Activated T-helper 1 cell treated with anti-CD3 and anti-CD28 coated beads, Interleukin-12 subunit alpha, Interleukin-12 subunit beta, Interleukin-2, Interleukin-4 antibody, amounts not matched to agents 30 ng/mL and 10 ng/mL and 1 ng/mL, durations not matched to agents 14 hours and 24 hours and 36 hours (primary cell): ENCODE measurements at regions of chr1 and their contacts with region 1.

Region 1: DNA sequence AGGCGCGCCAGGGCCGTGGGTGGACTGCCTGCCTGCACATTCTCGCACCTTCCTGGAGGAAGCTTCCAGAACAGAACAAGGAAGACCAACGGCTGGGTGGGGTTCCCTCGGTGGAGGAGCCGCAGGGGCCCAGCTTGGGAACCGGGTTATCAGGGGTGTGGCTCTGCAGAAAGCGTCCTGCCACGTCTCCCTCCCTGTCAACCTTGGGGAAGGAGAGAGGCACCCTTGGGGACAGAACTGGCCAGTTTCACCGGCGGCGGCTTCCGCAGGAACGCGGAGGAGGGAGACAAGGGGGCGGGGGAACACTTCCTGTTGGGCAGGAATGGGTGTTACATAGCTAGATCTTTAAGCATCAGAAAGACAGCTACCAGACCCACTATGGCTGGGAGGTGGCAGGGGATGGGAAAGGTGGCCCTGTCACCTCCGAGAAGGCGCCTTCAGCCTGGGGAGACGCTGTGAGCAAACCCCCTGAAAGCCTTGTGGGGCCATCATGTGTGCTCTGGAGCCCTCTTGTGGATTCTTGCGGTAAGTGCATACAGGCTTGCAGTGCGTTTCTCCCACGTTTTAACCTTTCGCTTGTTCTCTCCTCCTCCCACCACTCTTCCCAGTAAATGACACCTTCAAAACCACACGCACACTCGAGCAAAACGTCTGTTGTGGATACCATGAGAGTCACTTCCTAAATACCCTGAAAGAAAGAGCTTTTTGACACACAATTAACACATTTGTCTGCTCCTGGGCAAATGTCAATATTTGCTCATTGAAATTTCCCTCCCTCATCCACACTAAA is 3.8 kb upstream of the PLEKHA6 start:
- DNase-seq: peak; percentile 62
- H3K4me3 Mint-ChIP-seq: peak overlapping the region; percentile 58
- H3K27ac Mint-ChIP-seq: peak overlapping the region; percentile 82
- H3K4me1 Mint-ChIP-seq: peaks cover 40% of the 10 kb centered on the region
- H3K27me3 Mint-ChIP-seq: peaks cover 17% of the 10 kb centered on the region

Region 2: GRCh38 chr1:204162231-204163074 is 201.1 kb before region 1 on chr1:
- intact Hi-C with region 1: loop called (anchors 1 kb)
- DNase-seq: peak; percentile 57
- H3K4me3 Mint-ChIP-seq: no peak overlapping the region
- H3K27ac Mint-ChIP-seq: no peak overlapping the region
- H3K4me1 Mint-ChIP-seq: no peaks in the 10 kb centered on the region
- H3K27me3 Mint-ChIP-seq: peaks cover 4% of the 10 kb centered on the region

Region 3: GRCh38 chr1:204213668-204214662 is 149.6 kb before region 1 on chr1 and contains the start of gene GOLT1A:
- intact Hi-C with region 1: loop called (anchors 1 kb)
- DNase-seq: peak; percentile 10
- H3K4me3 Mint-ChIP-seq: peak within 1 kb of the TSS; percentile 59
- H3K27ac Mint-ChIP-seq: peak within 1 kb of the TSS; percentile 3
- H3K4me1 Mint-ChIP-seq: peaks cover 5% of the 10 kb centered on the region
- H3K27me3 Mint-ChIP-seq: peaks cover 7% of the 10 kb centered on the region
- total RNA-seq, gene GOLT1A: not detected in 2 replicates

Region 4: DNA sequence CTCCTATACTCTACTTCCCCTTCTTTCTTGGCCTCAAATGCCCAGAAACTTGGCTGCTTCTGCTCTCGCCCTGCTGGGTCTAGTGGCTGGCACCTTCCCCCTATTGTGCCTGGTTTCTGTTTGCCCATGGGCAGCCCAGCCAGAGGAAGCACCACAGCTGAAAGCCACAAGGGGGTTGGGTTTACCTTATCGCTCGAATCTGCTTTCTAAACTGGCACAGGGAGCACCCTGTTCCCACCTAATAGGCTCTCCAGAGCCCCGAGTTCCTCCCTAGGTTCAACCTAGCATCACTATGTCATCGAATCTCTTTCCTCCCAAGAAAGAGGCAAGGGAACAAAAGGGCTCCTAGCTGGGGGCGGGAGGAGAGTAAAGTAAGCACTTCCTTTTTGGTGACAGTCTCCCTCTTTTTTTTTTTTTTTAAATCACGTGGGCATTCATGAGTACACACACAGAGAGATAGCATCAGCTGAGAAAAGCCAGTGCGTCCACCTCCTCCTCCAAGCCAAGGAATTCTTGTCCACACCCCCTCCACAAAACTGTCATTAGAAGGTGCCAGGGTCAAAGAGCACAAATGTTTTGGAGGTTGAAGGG is 76.6 kb before region 1 on chr1:
- intact Hi-C with region 1: loop called (anchors 1 kb)
- DNase-seq: no peak
- H3K4me3 Mint-ChIP-seq: peak overlapping the region; percentile 66
- H3K27ac Mint-ChIP-seq: peak overlapping the region; percentile 57
- H3K4me1 Mint-ChIP-seq: peaks cover 17% of the 10 kb centered on the region
- H3K27me3 Mint-ChIP-seq: peaks cover 29% of the 10 kb centered on the region

Region 5: GRCh38 chr1:204377795-204378608 is 14.5 kb after region 1 on chr1:
- intact Hi-C with region 1: loop called (anchors 1 kb)
- DNase-seq: peak; percentile 25
- H3K4me3 Mint-ChIP-seq: peak overlapping the region; percentile 82
- H3K27ac Mint-ChIP-seq: no peak overlapping the region
- H3K4me1 Mint-ChIP-seq: peaks cover 8% of the 10 kb centered on the region
- H3K27me3 Mint-ChIP-seq: peaks cover 39% of the 10 kb centered on the region

Region 6: GRCh38 chr1:204411451-204412204 is 48.1 kb after region 1 on chr1 and contains the start of gene PPP1R15B:
- intact Hi-C with region 1: loop called (anchors 2 kb)
- DNase-seq: peak; percentile 98
- H3K4me3 Mint-ChIP-seq: peak within 1 kb of the TSS; percentile 99
- H3K27ac Mint-ChIP-seq: peak within 1 kb of the TSS; percentile 99
- H3K4me1 Mint-ChIP-seq: peaks cover 12% of the 10 kb centered on the region
- H3K27me3 Mint-ChIP-seq: no peaks in the 10 kb centered on the region
- total RNA-seq, gene PPP1R15B: 75.8 and 76.2 TPM in 2 replicates